CD4-positive, alpha-beta T cell (primary cell): ENCODE measurements at regions of chr15 and their contacts with region 1.

Region 1: GRCh38 chr15:66293419-66294156 is at the start of gene DIS3L:
- DNase-seq: peak; percentile 36 to 86 (median 58)
- ATAC-seq: peak; percentile 72
- H3K4me3 ChIP-seq: peak within 1 kb of the TSS; percentile 75
- H3K4me3 Mint-ChIP-seq: peak within 1 kb of the TSS; percentile 92
- H3K27ac ChIP-seq: peak within 1 kb of the TSS; percentile 80 to 93
- H3K27ac Mint-ChIP-seq: peak within 1 kb of the TSS; percentile 97
- H3K4me1 ChIP-seq: peaks cover 33% of the 10 kb centered on the region
- H3K4me1 Mint-ChIP-seq: peaks cover 49% of the 10 kb centered on the region
- H3K27me3 ChIP-seq: no peaks in the 10 kb centered on the region
- H3K27me3 Mint-ChIP-seq: no peaks in the 10 kb centered on the region
- CTCF ChIP-seq: no peak
- total RNA-seq, gene DIS3L: 22.6 to 24.3 TPM

Region 2: GRCh38 chr15:65881766-65882434 is 411.7 kb before region 1 on chr15:
- CTCF ChIA-PET with region 1: no interaction called
- POLR2A ChIA-PET with region 1: no interaction called
- intact Hi-C with region 1: loop called (anchors 10 kb)
- DNase-seq: peak in 2 of 14 experiments; percentile 23 to 29
- ATAC-seq: peak; percentile 32
- H3K4me3 ChIP-seq: no peak overlapping the region
- H3K4me3 Mint-ChIP-seq: peak overlapping the region; percentile 27
- H3K27ac ChIP-seq: no peak overlapping the region
- H3K27ac Mint-ChIP-seq: peak overlapping the region; percentile 89
- H3K4me1 ChIP-seq: peaks cover 12% of the 10 kb centered on the region
- H3K4me1 Mint-ChIP-seq: peaks cover 66% of the 10 kb centered on the region
- H3K27me3 ChIP-seq: no peaks in the 10 kb centered on the region
- H3K27me3 Mint-ChIP-seq: no peaks in the 10 kb centered on the region
- CTCF ChIP-seq: no peak

Region 3: DNA sequence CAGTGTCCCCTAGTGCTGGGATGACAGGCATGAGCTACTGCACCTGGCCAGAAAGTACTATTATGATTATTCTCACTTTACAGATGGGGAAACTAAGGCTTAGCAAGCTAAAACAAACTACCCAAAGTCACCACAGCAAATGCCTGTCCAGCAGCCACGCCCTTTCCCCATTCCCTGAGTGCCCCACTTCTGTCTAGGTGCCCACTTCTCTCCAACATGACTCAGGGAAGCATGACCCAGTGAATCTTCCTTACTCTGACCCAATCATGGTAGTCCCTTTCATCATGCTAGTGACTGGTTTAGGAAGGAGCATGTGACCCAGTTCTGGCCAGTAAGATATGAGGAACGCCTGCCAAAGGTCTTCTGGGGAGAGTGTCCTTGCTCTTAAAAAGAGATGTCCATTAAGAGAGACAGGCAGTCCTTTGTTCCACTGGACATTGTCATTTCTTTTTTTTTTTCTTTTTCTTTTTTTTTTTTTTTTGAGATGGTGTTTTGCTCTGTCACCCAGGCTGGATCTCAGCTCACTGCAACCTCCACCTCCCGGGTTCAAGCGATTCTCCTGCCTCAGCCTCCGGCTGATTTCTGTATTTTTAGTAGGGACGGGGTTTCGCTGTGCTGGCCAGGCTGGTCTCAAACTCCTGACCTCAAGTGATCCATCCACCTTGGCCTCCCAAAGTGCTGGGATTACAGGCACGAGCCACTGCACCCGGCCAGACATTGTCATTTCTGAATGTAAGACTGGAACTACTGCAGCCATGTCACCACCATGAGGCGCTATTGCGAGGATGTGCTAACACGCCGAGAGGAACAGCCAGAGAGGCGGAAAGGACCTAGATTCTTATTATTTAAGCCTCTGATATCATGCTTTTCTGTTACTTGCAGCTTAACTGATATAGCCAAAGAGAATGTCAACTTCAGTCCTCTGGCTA is 59.8 kb before region 1 on chr15:
- CTCF ChIA-PET with region 1: no interaction called
- POLR2A ChIA-PET with region 1: no interaction called
- intact Hi-C with region 1: no loop called
- DNase-seq: no peak
- ATAC-seq: no peak
- H3K4me3 ChIP-seq: no peak overlapping the region
- H3K4me3 Mint-ChIP-seq: no peak overlapping the region
- H3K27ac ChIP-seq: no peak overlapping the region
- H3K27ac Mint-ChIP-seq: no peak overlapping the region
- H3K4me1 ChIP-seq: no peaks in the 10 kb centered on the region
- H3K4me1 Mint-ChIP-seq: no peaks in the 10 kb centered on the region
- H3K27me3 ChIP-seq: no peaks in the 10 kb centered on the region
- H3K27me3 Mint-ChIP-seq: peaks cover 10% of the 10 kb centered on the region
- CTCF ChIP-seq: no peak